ENCODE measurements at regions of chr12 and their contacts with region 1.

Region 1: DNA sequence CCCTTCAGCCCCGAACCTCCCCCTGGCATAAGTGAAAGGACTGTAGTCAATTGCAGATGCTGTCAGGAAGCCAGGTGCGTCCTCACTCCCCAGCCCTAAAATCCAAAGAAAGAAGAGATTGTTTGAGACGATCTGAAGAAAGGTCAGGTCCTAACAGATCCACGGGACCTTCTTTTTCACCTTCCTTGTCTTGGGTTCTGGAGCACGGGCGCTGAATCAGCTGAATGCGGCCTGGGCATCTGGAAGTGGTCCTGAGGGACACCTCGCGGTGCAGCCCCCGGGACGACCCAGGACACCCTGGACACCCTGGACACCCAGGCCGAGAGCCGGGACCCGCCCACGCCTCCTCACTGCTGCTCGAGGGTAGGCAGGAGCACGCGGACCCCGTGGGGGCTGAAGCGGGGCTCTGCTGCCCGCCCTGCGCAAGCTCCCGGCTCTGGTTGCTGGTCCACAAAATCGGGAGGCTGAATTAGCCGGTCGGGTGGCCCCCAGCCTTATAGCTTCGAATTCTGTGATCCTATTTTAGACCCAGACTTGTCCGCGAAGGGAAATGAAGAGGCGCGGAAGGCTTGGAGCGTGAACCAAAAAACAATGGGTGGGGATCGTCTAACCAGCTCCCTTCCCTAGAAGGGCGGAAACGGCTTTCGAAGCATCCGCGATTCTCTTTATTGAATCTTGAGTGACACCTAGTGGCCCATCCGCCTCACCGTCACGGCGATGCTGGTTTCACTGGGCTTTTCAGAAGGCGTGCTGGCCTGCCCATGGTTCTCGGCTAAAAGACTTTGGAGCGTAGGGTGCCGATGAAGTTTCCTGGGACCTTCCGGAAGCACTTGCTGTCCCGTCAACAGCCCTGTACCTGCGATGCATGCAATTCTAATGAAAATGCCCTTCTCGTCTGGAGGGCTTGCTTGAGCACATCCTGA is 46.4 kb upstream of the PLXNC1 start:
- DNase-seq: peak; percentile 71 to 91 (median 84)
- ATAC-seq: peak; percentile 86
- H3K4me3 ChIP-seq: peak overlapping the region; percentile 58 to 70
- H3K4me3 Mint-ChIP-seq: peak overlapping the region; percentile 87
- H3K27ac ChIP-seq: no peak overlapping the region
- H3K27ac Mint-ChIP-seq: peak overlapping the region; percentile 52
- H3K4me1 ChIP-seq: peaks cover 2% of the 10 kb centered on the region
- H3K4me1 Mint-ChIP-seq: peaks cover 11% of the 10 kb centered on the region
- H3K27me3 ChIP-seq: no peaks in the 10 kb centered on the region
- H3K27me3 Mint-ChIP-seq: peaks cover 33% of the 10 kb centered on the region
- CTCF ChIP-seq: peak; percentile 69

Region 2: GRCh38 chr12:92784795-92785562 is 1317.0 kb before region 1 on chr12:
- CTCF ChIA-PET with region 1: interaction called, 4 read pairs
- POLR2A ChIA-PET with region 1: no interaction called
- intact Hi-C with region 1: loop called (anchors 2 kb)
- DNase-seq: peak in 3 of 9 experiments; percentile 28 to 77 (median 68)
- ATAC-seq: peak; percentile 99
- H3K4me3 ChIP-seq: no peak overlapping the region
- H3K4me3 Mint-ChIP-seq: no peak overlapping the region
- H3K27ac ChIP-seq: no peak overlapping the region
- H3K27ac Mint-ChIP-seq: no peak overlapping the region
- H3K4me1 ChIP-seq: no peaks in the 10 kb centered on the region
- H3K4me1 Mint-ChIP-seq: peaks cover 11% of the 10 kb centered on the region
- H3K27me3 ChIP-seq: no peaks in the 10 kb centered on the region
- H3K27me3 Mint-ChIP-seq: no peaks in the 10 kb centered on the region
- CTCF ChIP-seq: peak; percentile 61

Region 3: GRCh38 chr12:93441617-93442410 is 660.2 kb before region 1 on chr12 and contains the start of gene UBE2N:
- CTCF ChIA-PET with region 1: interaction called, 5 read pairs
- POLR2A ChIA-PET with region 1: interaction called, 3 read pairs
- intact Hi-C with region 1: loop called in 1 of 2 experiments (anchors 1 kb)
- DNase-seq: peak; percentile 92 to 97 (median 96)
- ATAC-seq: peak; percentile 83
- H3K4me3 ChIP-seq: peak within 1 kb of the TSS; percentile 78
- H3K4me3 Mint-ChIP-seq: peak within 1 kb of the TSS; percentile 97
- H3K27ac ChIP-seq: peak within 1 kb of the TSS; percentile 87 to 90
- H3K27ac Mint-ChIP-seq: peak within 1 kb of the TSS; percentile 96
- H3K4me1 ChIP-seq: peaks cover 47% of the 10 kb centered on the region
- H3K4me1 Mint-ChIP-seq: peaks cover 48% of the 10 kb centered on the region
- H3K27me3 ChIP-seq: no peaks in the 10 kb centered on the region
- H3K27me3 Mint-ChIP-seq: no peaks in the 10 kb centered on the region
- CTCF ChIP-seq: no peak
- total RNA-seq, gene UBE2N: 89.5 to 93.6 TPM

Region 4: DNA sequence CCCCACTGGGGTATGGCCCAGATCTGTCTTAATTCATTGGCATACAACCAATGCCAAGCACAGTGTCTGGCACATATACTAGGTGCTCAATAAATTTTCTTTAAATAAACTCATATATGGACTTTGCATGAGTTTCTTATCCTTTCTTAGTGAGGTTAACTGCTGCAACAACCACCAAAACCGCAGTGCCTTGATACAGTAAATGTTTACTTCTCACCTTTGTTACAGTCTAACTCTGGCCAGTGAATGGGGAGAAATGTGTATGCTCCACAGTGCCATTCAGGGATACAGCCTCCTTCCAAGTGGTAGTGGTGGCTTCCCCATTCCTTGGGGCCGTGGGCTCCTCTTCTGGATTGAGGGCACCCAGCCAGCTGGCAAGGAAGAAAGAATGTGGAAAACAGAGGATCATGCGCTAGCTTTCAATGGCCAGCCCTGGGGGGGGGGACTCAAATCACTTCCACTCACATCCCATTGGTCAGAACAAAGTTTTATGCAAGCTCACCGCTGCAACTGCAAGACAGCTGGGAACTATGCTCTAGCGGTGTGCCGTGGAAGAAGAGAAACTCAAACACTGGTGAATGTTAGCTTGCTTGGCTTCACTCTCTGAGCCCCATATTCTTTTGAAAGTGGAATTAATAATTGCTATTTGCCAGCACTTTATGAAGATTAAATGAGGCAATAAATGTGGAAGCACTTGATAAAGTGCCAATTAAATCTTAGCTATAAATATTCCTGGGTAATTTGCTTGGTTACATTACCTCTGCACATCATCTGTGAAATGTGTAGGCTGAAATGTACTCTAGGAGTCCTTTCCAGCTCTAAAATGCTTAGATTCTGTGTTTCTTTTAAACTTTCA is 580.5 kb before region 1 on chr12:
- CTCF ChIA-PET with region 1: interaction called, 16 read pairs
- POLR2A ChIA-PET with region 1: no interaction called
- intact Hi-C with region 1: no loop called
- DNase-seq: peak in 2 of 9 experiments; percentile 20 to 21
- ATAC-seq: no peak
- H3K4me3 ChIP-seq: no peak overlapping the region
- H3K4me3 Mint-ChIP-seq: no peak overlapping the region
- H3K27ac ChIP-seq: no peak overlapping the region
- H3K27ac Mint-ChIP-seq: no peak overlapping the region
- H3K4me1 ChIP-seq: no peaks in the 10 kb centered on the region
- H3K4me1 Mint-ChIP-seq: no peaks in the 10 kb centered on the region
- H3K27me3 ChIP-seq: no peaks in the 10 kb centered on the region
- H3K27me3 Mint-ChIP-seq: peaks cover 10% of the 10 kb centered on the region
- CTCF ChIP-seq: no peak

Region 5: GRCh38 chr12:93677195-93678064 is 424.6 kb before region 1 on chr12 and contains the start of gene CRADD:
- CTCF ChIA-PET with region 1: interaction called, 16 read pairs
- POLR2A ChIA-PET with region 1: interaction called, 4 read pairs
- intact Hi-C with region 1: loop called (anchors 1 kb)
- DNase-seq: peak; percentile 65 to 99 (median 83)
- ATAC-seq: peak; percentile 95
- H3K4me3 ChIP-seq: peak within 1 kb of the TSS; percentile 67 to 83
- H3K4me3 Mint-ChIP-seq: peak within 1 kb of the TSS; percentile 98
- H3K27ac ChIP-seq: peak within 1 kb of the TSS; percentile 95 to 97
- H3K27ac Mint-ChIP-seq: peak within 1 kb of the TSS; percentile 100
- H3K4me1 ChIP-seq: peaks cover 8% of the 10 kb centered on the region
- H3K4me1 Mint-ChIP-seq: peaks cover 41% of the 10 kb centered on the region
- H3K27me3 ChIP-seq: no peaks in the 10 kb centered on the region
- H3K27me3 Mint-ChIP-seq: peaks cover 13% of the 10 kb centered on the region
- CTCF ChIP-seq: no peak
- total RNA-seq, gene CRADD: 5.3 to 5.7 TPM

Region 6: DNA sequence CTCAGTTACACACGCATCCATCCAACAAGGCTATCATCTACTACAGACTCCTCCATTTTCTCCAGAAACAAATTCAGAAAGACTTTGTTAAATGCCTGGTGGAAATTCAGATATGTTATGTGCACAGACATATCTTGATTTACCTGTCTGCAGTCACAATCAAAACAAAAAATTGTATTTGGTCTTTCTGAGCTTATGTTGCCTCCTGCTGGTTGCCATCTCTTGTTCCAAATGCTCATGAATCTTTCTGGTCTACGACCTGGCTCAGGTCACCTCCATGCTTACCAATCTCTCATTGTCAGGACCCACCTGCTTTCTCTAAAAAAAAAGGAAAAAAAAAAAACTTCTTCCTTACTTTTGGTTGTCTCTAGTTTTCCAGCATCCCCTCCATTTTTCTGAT is 122.8 kb before region 1 on chr12:
- CTCF ChIA-PET with region 1: interaction called, 29 read pairs
- POLR2A ChIA-PET with region 1: no interaction called
- intact Hi-C with region 1: no loop called
- DNase-seq: peak in 4 of 9 experiments; percentile 3 to 54 (median 32)
- ATAC-seq: no peak
- H3K4me3 ChIP-seq: no peak overlapping the region
- H3K4me3 Mint-ChIP-seq: no peak overlapping the region
- H3K27ac ChIP-seq: no peak overlapping the region
- H3K27ac Mint-ChIP-seq: no peak overlapping the region
- H3K4me1 ChIP-seq: no peaks in the 10 kb centered on the region
- H3K4me1 Mint-ChIP-seq: peaks cover 7% of the 10 kb centered on the region
- H3K27me3 ChIP-seq: no peaks in the 10 kb centered on the region
- H3K27me3 Mint-ChIP-seq: no peaks in the 10 kb centered on the region
- CTCF ChIP-seq: peak; percentile 28

Region 7: DNA sequence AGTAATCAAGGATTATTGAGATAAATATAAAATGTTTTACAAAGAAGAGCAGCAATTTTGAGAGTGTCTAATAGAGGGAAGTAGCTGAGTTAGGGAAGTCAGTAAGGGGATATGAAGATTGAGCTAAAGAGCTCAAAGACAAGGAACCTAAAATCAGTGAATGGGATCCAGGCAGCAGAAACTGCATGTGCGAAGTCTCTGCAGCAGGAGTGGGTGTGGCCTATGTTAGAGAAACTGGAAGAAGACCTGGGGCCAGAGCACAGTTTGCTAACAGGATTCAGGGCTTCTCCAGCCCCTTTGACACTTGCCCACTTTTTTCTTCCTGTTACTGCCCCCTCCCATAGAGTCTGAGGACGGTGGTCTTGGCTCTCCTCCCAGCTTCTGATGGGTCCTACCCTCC is 10.1 kb after region 1 on chr12:
- CTCF ChIA-PET with region 1: interaction called, 41 read pairs
- POLR2A ChIA-PET with region 1: interaction called, 3 read pairs
- intact Hi-C with region 1: no loop called
- DNase-seq: no peak
- ATAC-seq: no peak
- H3K4me3 ChIP-seq: no peak overlapping the region
- H3K4me3 Mint-ChIP-seq: no peak overlapping the region
- H3K27ac ChIP-seq: no peak overlapping the region
- H3K27ac Mint-ChIP-seq: no peak overlapping the region
- H3K4me1 ChIP-seq: no peaks in the 10 kb centered on the region
- H3K4me1 Mint-ChIP-seq: no peaks in the 10 kb centered on the region
- H3K27me3 ChIP-seq: no peaks in the 10 kb centered on the region
- H3K27me3 Mint-ChIP-seq: peaks cover 2% of the 10 kb centered on the region
- CTCF ChIP-seq: no peak

Region 8: GRCh38 chr12:94445662-94446061 is 343.7 kb after region 1 on chr12:
- CTCF ChIA-PET with region 1: no interaction called
- POLR2A ChIA-PET with region 1: no interaction called
- intact Hi-C with region 1: no loop called
- DNase-seq: no peak
- ATAC-seq: no peak
- H3K4me3 ChIP-seq: no peak overlapping the region
- H3K4me3 Mint-ChIP-seq: no peak overlapping the region
- H3K27ac ChIP-seq: no peak overlapping the region
- H3K27ac Mint-ChIP-seq: no peak overlapping the region
- H3K4me1 ChIP-seq: no peaks in the 10 kb centered on the region
- H3K4me1 Mint-ChIP-seq: peaks cover 13% of the 10 kb centered on the region
- H3K27me3 ChIP-seq: no peaks in the 10 kb centered on the region
- H3K27me3 Mint-ChIP-seq: no peaks in the 10 kb centered on the region
- CTCF ChIP-seq: no peak

Measured in CD8-positive, alpha-beta T cell (primary cell).